B cell (primary cell): ENCODE measurements at regions of chr10 and their contacts with region 1.

Region 1: GRCh38 chr10:28569506-28570159 is 36.7 kb downstream of the WAC start:
- DNase-seq: no peak
- ATAC-seq: no peak
- H3K4me3 ChIP-seq: no peak overlapping the region
- H3K4me3 Mint-ChIP-seq: no peak overlapping the region
- H3K27ac ChIP-seq: no peak overlapping the region
- H3K27ac Mint-ChIP-seq: no peak overlapping the region
- H3K4me1 ChIP-seq: peaks cover 4 to 14% of the 10 kb centered on the region in 2 donors
- H3K4me1 Mint-ChIP-seq: peaks cover 69% of the 10 kb centered on the region
- H3K27me3 ChIP-seq: no peaks in the 10 kb centered on the region
- H3K27me3 Mint-ChIP-seq: no peaks in the 10 kb centered on the region
- CTCF ChIP-seq: no peak

Region 2: GRCh38 chr10:27713927-27714326 is 855.7 kb before region 1 on chr10:
- CTCF ChIA-PET with region 1: no interaction called
- POLR2A ChIA-PET with region 1: no interaction called
- intact Hi-C with region 1: no loop called
- DNase-seq: no peak
- ATAC-seq: no peak
- H3K4me3 ChIP-seq: no peak overlapping the region
- H3K4me3 Mint-ChIP-seq: no peak overlapping the region
- H3K27ac ChIP-seq: no peak overlapping the region
- H3K27ac Mint-ChIP-seq: no peak overlapping the region
- H3K4me1 ChIP-seq: no peaks in the 10 kb centered on the region
- H3K4me1 Mint-ChIP-seq: no peaks in the 10 kb centered on the region
- H3K27me3 ChIP-seq: peaks cover 0 to 1% (median 0%) of the 10 kb centered on the region in 4 experiments
- H3K27me3 Mint-ChIP-seq: peaks cover 22% of the 10 kb centered on the region
- CTCF ChIP-seq: no peak

Region 3: DNA sequence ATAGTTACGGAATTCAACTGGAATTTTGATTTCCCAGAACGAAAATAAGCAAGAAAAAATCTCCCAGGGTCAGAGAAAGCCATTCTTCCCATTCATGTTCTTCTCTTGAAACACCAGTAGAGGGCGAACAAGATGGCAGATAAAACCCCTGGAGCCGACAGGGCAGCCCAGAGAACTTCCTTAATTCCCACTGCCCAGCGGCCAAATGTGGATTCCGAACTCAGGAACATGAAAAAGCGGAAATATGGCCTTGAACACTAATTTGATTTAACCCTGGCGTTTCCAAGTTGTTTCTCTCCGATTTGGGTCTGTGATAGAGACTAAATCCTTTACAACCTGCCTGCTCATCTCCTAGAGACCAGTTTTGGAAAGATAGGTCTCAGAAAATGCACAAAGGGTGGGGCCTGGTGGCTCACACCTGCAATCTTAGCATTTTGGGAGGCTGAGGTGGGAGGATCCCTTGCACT is 137.4 kb before region 1 on chr10:
- CTCF ChIA-PET with region 1: interaction called, 3 read pairs
- POLR2A ChIA-PET with region 1: no interaction called
- intact Hi-C with region 1: loop called (anchors 10 kb)
- DNase-seq: peak; percentile 63
- ATAC-seq: peak; percentile 62
- H3K4me3 ChIP-seq: peak overlapping the region in 3 of 5 experiments; percentile 12 to 52 (median 33)
- H3K4me3 Mint-ChIP-seq: peak overlapping the region; percentile 62
- H3K27ac ChIP-seq: no peak overlapping the region
- H3K27ac Mint-ChIP-seq: no peak overlapping the region
- H3K4me1 ChIP-seq: peaks cover 4 to 6% of the 10 kb centered on the region in 2 donors
- H3K4me1 Mint-ChIP-seq: peaks cover 6% of the 10 kb centered on the region
- H3K27me3 ChIP-seq: no peaks in the 10 kb centered on the region
- H3K27me3 Mint-ChIP-seq: peaks cover 3% of the 10 kb centered on the region
- CTCF ChIP-seq: peak; percentile 87

Region 4: DNA sequence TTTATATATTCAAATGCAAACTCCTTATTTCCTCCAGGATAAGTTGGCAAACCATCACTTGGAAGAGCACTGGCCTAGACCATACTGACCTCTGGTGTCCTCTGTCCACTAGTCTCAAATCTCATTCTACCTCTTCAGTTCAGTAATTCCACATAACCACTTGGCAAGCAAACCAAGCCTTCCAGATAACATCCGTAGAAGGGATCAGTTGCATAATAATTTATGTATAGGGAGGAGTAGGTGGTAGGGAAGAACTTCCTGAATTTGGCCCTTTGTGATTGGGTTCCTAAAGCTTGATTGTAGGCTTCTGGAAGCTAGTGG is 18.3 kb after region 1 on chr10:
- CTCF ChIA-PET with region 1: interaction called, 4 read pairs
- POLR2A ChIA-PET with region 1: no interaction called
- intact Hi-C with region 1: loop called (anchors 1 kb)
- DNase-seq: no peak
- ATAC-seq: no peak
- H3K4me3 ChIP-seq: no peak overlapping the region
- H3K4me3 Mint-ChIP-seq: no peak overlapping the region
- H3K27ac ChIP-seq: no peak overlapping the region
- H3K27ac Mint-ChIP-seq: no peak overlapping the region
- H3K4me1 ChIP-seq: no peaks in the 10 kb centered on the region
- H3K4me1 Mint-ChIP-seq: peaks cover 5% of the 10 kb centered on the region
- H3K27me3 ChIP-seq: no peaks in the 10 kb centered on the region
- H3K27me3 Mint-ChIP-seq: no peaks in the 10 kb centered on the region
- CTCF ChIP-seq: no peak

Region 5: DNA sequence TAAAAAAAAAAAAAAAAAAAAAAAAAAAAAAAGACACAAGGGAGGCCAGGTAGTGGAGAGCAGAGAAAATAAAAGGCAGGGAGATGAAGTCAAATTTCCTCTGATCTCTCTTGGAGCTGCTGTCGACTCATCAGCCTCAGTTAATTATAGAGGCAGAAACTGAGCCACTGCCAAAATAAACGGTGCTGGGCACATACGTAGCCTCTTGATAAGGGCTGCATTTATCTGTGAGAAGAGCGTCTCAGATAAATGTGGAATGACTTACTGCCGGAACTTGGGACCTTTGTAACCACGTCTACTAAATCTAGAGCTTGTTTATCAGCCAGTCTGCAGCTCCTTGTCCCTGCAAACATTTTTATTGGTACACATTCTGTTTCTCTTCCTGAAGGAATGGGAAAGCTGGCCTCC is 270.0 kb after region 1 on chr10:
- CTCF ChIA-PET with region 1: no interaction called
- POLR2A ChIA-PET with region 1: no interaction called
- intact Hi-C with region 1: no loop called
- DNase-seq: no peak
- ATAC-seq: no peak
- H3K4me3 ChIP-seq: no peak overlapping the region
- H3K4me3 Mint-ChIP-seq: no peak overlapping the region
- H3K27ac ChIP-seq: no peak overlapping the region
- H3K27ac Mint-ChIP-seq: no peak overlapping the region
- H3K4me1 ChIP-seq: no peaks in the 10 kb centered on the region
- H3K4me1 Mint-ChIP-seq: no peaks in the 10 kb centered on the region
- H3K27me3 ChIP-seq: no peaks in the 10 kb centered on the region
- H3K27me3 Mint-ChIP-seq: no peaks in the 10 kb centered on the region
- CTCF ChIP-seq: no peak